Activated CD8-positive, alpha-beta T cell treated with anti-CD3 and anti-CD28 coated beads for 36 hours (primary cell): ENCODE measurements at regions of chr3 and their contacts with region 1.

Region 1: DNA sequence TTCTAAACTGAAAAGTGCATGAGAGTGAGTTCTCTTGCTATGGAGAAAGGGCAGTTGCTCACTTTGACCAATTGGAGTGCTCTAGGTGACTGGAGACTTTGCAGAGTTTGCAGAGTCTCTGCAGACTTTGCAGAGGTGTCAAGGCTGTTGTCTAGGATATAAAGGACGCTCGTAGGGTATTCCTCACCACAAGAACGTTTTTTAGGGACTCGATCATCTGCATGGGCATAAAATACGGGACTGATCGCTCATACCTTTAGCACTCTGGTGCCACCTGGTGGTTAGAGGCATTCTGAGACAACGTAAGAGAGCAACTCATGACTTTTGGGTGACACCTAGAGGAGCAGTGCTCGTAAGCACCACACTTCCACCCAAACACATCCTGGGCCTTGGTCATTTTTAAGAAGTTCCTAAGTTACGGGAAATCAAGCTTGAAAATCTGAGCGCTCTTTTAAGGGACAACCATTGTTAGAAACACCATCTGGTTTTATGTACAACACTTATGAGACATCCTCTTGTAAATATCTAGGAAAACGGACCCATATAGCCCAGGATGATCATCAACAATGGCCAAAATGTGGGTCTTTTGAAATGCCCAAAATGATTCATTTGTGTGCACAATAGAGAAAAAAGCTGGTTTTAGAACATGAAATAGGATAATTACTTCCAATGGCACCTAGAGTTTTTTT is 51.6 kb upstream of the XCR1 start:
- DNase-seq: peak; percentile 97
- ATAC-seq: peak; percentile 99
- H3K4me3 Mint-ChIP-seq: no peak overlapping the region
- H3K27ac Mint-ChIP-seq: no peak overlapping the region
- H3K4me1 Mint-ChIP-seq: peaks cover 10% of the 10 kb centered on the region
- H3K27me3 Mint-ChIP-seq: peaks cover 8% of the 10 kb centered on the region
- CTCF ChIP-seq: peak; percentile 99

Region 2: DNA sequence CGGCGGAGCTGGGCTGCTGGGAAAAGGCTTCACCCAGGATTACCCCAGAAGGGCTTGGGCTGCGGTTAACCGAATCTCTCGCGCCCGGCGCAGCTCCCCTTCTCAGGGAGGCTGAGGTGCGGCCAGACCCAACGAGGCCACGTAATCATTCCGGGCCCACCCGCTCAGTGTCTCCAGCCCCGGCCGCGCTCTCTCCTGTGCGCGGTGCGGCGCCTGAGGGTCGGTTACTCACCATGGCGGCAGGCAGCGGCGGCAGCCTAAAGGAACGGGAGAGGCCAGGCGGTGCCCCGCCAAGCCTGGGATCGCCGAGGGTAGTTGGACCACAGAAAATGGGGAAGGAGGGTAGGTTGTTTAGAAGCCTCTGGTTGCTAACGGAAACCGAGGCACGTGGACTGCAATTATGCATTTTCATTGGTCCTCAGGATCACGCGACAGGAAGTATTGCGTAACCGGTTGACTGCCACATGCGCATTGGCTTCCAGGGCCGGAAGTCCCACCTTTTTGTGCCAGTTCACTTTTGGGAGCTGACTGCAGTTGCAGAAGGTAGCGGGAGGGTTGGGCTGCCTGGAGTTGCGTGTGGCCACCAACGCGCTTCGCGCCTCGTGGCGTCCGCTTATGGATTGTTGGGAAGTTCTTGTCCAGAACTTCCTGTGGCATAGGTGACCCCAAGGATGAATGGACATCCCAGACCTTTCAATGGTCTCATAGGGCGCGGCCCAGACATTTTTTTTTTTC is 236.9 kb before region 1 on chr3 and contains the start of gene LZTFL1:
- CTCF ChIA-PET with region 1: interaction called, 11 read pairs
- POLR2A ChIA-PET with region 1: no interaction called
- intact Hi-C with region 1: no loop called
- DNase-seq: peak; percentile 95
- ATAC-seq: peak; percentile 87
- H3K4me3 Mint-ChIP-seq: peak within 1 kb of the TSS; percentile 90
- H3K27ac Mint-ChIP-seq: peak within 1 kb of the TSS; percentile 83
- H3K4me1 Mint-ChIP-seq: peaks cover 15% of the 10 kb centered on the region
- H3K27me3 Mint-ChIP-seq: no peaks in the 10 kb centered on the region
- CTCF ChIP-seq: no peak
- total RNA-seq, gene LZTFL1: 4.7 TPM

Region 3: DNA sequence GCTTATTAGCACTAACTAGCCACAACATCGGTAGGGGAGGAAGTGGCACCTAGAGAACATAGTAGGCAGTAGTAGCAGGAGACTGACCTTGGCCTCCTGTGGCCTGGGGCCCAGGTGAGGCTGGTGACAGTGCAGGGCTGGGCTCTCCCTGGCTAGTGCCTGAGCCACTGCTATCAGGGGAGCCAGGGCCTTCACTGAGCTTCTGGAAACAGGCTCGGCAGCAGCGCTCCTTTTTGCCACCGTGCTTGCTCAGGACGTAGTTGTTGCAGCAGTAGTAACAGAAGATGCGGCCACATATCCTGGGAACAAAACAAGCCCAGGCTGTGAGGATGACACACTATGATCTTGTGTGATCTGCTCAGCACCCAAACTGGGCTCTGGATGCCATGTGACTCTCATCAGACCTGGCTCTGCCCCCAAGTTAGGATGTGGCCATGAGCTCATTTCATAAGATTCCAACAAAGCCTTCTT is 120.5 kb before region 1 on chr3:
- CTCF ChIA-PET with region 1: interaction called, 656 read pairs
- POLR2A ChIA-PET with region 1: no interaction called
- intact Hi-C with region 1: no loop called
- DNase-seq: no peak
- ATAC-seq: no peak
- H3K4me3 Mint-ChIP-seq: no peak overlapping the region
- H3K27ac Mint-ChIP-seq: peak overlapping the region; percentile 44
- H3K4me1 Mint-ChIP-seq: peaks cover 31% of the 10 kb centered on the region
- H3K27me3 Mint-ChIP-seq: no peaks in the 10 kb centered on the region
- CTCF ChIP-seq: no peak

Region 4: GRCh38 chr3:45995236-45996192 is 83.3 kb before region 1 on chr3 and contains the start of gene FYCO1:
- CTCF ChIA-PET with region 1: interaction called, 28 read pairs
- POLR2A ChIA-PET with region 1: interaction called, 3 read pairs
- intact Hi-C with region 1: no loop called
- DNase-seq: peak; percentile 96
- ATAC-seq: peak; percentile 82
- H3K4me3 Mint-ChIP-seq: peak within 1 kb of the TSS; percentile 83
- H3K27ac Mint-ChIP-seq: peak within 1 kb of the TSS; percentile 91
- H3K4me1 Mint-ChIP-seq: peaks cover 46% of the 10 kb centered on the region
- H3K27me3 Mint-ChIP-seq: peaks cover 4% of the 10 kb centered on the region
- CTCF ChIP-seq: no peak
- total RNA-seq, gene FYCO1: 14.1 to 14.5 TPM

Region 5: GRCh38 chr3:46089237-46090011 is 10.6 kb after region 1 on chr3:
- CTCF ChIA-PET with region 1: interaction called, 63 read pairs
- POLR2A ChIA-PET with region 1: no interaction called
- intact Hi-C with region 1: no loop called
- DNase-seq: peak; percentile 55
- ATAC-seq: peak; percentile 76
- H3K4me3 Mint-ChIP-seq: no peak overlapping the region
- H3K27ac Mint-ChIP-seq: no peak overlapping the region
- H3K4me1 Mint-ChIP-seq: peaks cover 20% of the 10 kb centered on the region
- H3K27me3 Mint-ChIP-seq: peaks cover 14% of the 10 kb centered on the region
- CTCF ChIP-seq: no peak

Region 6: GRCh38 chr3:46163318-46164041 is 84.6 kb after region 1 on chr3:
- CTCF ChIA-PET with region 1: no interaction called
- POLR2A ChIA-PET with region 1: no interaction called
- intact Hi-C with region 1: no loop called
- DNase-seq: no peak
- ATAC-seq: no peak
- H3K4me3 Mint-ChIP-seq: no peak overlapping the region
- H3K27ac Mint-ChIP-seq: no peak overlapping the region
- H3K4me1 Mint-ChIP-seq: no peaks in the 10 kb centered on the region
- H3K27me3 Mint-ChIP-seq: peaks cover 5% of the 10 kb centered on the region
- CTCF ChIP-seq: no peak

Region 7: GRCh38 chr3:46368569-46368968 is 289.7 kb after region 1 on chr3:
- CTCF ChIA-PET with region 1: interaction called, 33 read pairs
- POLR2A ChIA-PET with region 1: no interaction called
- intact Hi-C with region 1: no loop called
- DNase-seq: peak; percentile 79
- ATAC-seq: peak; percentile 55
- H3K4me3 Mint-ChIP-seq: no peak overlapping the region
- H3K27ac Mint-ChIP-seq: peak overlapping the region; percentile 79
- H3K4me1 Mint-ChIP-seq: peaks cover 43% of the 10 kb centered on the region
- H3K27me3 Mint-ChIP-seq: peaks cover 6% of the 10 kb centered on the region
- CTCF ChIP-seq: peak; percentile 44